Activated CD4-positive, alpha-beta memory T cell treated with anti-CD3 and anti-CD28 coated beads for 36 hours (primary cell): ENCODE measurements at regions of chr6 and their contacts with region 1.

Region 1: GRCh38 chr6:151690768-151691562 is 116.5 kb upstream of the ESR1 start:
- DNase-seq: peak; percentile 63
- H3K4me3 Mint-ChIP-seq: peak overlapping the region; percentile 66
- H3K27ac Mint-ChIP-seq: peak overlapping the region; percentile 47
- H3K4me1 Mint-ChIP-seq: peaks cover 26% of the 10 kb centered on the region
- H3K27me3 Mint-ChIP-seq: peaks cover 5% of the 10 kb centered on the region

Region 2: GRCh38 chr6:151675746-151676416 is 15.1 kb before region 1 on chr6:
- CTCF ChIA-PET with region 1: interaction called, 13 read pairs
- POLR2A ChIA-PET with region 1: no interaction called
- intact Hi-C with region 1: no loop called
- DNase-seq: peak; percentile 65
- H3K4me3 Mint-ChIP-seq: no peak overlapping the region
- H3K27ac Mint-ChIP-seq: no peak overlapping the region
- H3K4me1 Mint-ChIP-seq: peaks cover 10% of the 10 kb centered on the region
- H3K27me3 Mint-ChIP-seq: peaks cover 4% of the 10 kb centered on the region

Region 3: GRCh38 chr6:151723152-151723551 is 32.2 kb after region 1 on chr6:
- CTCF ChIA-PET with region 1: interaction called, 3 read pairs
- POLR2A ChIA-PET with region 1: interaction called, 4 read pairs
- intact Hi-C with region 1: loop called (anchors 1 kb)
- DNase-seq: peak; percentile 69
- H3K4me3 Mint-ChIP-seq: no peak overlapping the region
- H3K27ac Mint-ChIP-seq: peak overlapping the region; percentile 9
- H3K4me1 Mint-ChIP-seq: peaks cover 23% of the 10 kb centered on the region
- H3K27me3 Mint-ChIP-seq: peaks cover 3% of the 10 kb centered on the region

Region 4: DNA sequence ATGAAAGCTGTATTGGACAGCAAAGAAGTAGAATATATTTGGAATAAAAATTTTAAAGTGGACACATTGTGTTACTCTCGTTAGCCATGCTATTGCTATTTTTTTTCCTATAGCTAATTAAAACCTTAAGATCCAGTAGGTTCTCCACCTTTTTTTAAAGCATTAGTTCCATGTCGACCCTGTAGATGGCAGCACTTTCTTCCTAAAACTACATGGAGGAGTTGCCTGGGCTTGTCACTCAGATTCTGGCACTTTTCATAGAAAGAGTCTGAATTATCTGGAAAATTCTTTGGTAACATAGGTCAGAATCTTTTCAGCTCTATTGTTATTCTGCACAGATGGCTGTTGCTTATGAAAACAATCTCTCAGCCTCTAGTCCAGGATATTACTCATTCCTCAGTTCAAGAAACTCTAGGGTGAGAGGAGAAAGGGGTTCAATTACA is 74.5 kb after region 1 on chr6:
- CTCF ChIA-PET with region 1: interaction called, 6 read pairs
- POLR2A ChIA-PET with region 1: no interaction called
- intact Hi-C with region 1: loop called (anchors 2 kb)
- DNase-seq: peak; percentile 30
- H3K4me3 Mint-ChIP-seq: no peak overlapping the region
- H3K27ac Mint-ChIP-seq: no peak overlapping the region
- H3K4me1 Mint-ChIP-seq: peaks cover 12% of the 10 kb centered on the region
- H3K27me3 Mint-ChIP-seq: peaks cover 1% of the 10 kb centered on the region

Region 5: GRCh38 chr6:151962246-151962846 is 271.4 kb after region 1 on chr6:
- CTCF ChIA-PET with region 1: no interaction called
- POLR2A ChIA-PET with region 1: no interaction called
- intact Hi-C with region 1: loop called (anchors 5 kb)
- DNase-seq: peak; percentile 22
- H3K4me3 Mint-ChIP-seq: no peak overlapping the region
- H3K27ac Mint-ChIP-seq: peak overlapping the region; percentile 19
- H3K4me1 Mint-ChIP-seq: peaks cover 17% of the 10 kb centered on the region
- H3K27me3 Mint-ChIP-seq: peaks cover 16% of the 10 kb centered on the region

Region 6: GRCh38 chr6:152267967-152268845 is 577.2 kb after region 1 on chr6:
- CTCF ChIA-PET with region 1: interaction called, 11 read pairs
- POLR2A ChIA-PET with region 1: no interaction called
- intact Hi-C with region 1: loop called (anchors 1 kb)
- DNase-seq: no peak
- H3K4me3 Mint-ChIP-seq: no peak overlapping the region
- H3K27ac Mint-ChIP-seq: no peak overlapping the region
- H3K4me1 Mint-ChIP-seq: peaks cover 16% of the 10 kb centered on the region
- H3K27me3 Mint-ChIP-seq: no peaks in the 10 kb centered on the region

Region 7: DNA sequence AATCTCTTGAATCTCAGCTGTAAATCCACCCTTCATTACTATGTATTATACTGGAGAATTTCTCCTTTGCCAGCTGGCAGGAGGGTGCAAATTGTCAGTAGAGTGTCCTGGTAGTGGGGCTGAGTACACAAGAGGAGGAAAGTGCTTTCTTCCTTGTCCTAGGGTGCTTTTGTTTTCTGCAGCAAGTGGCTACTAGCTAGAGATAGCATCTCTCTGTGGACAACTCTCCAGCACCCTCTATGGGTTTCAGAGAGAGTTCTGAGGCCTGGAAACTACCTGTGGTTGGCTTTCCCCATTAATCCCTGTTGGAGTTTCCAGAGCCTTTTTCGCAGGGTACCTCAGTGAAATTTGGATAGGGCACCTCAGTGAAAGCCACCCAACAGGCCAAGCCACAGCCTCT is 1862.7 kb after region 1 on chr6:
- CTCF ChIA-PET with region 1: no interaction called
- POLR2A ChIA-PET with region 1: no interaction called
- intact Hi-C with region 1: no loop called
- DNase-seq: no peak
- H3K4me3 Mint-ChIP-seq: no peak overlapping the region
- H3K27ac Mint-ChIP-seq: no peak overlapping the region
- H3K4me1 Mint-ChIP-seq: no peaks in the 10 kb centered on the region
- H3K27me3 Mint-ChIP-seq: no peaks in the 10 kb centered on the region